ENCODE measurements at regions of chrX and their contacts with region 1.

Region 1: GRCh38 chrX:53089224-53089842 is 4.6 kb upstream of the KANTR start:
- DNase-seq: no peak
- ATAC-seq: no peak
- H3K4me3 ChIP-seq: peak overlapping the region in 1 of 2 donors; percentile 65
- H3K27ac ChIP-seq: peak overlapping the region in 1 of 2 donors; percentile 31
- H3K4me1 ChIP-seq: peaks cover 0 to 2% of the 10 kb centered on the region in 2 donors
- H3K27me3 ChIP-seq: no peaks in the 10 kb centered on the region

Region 2: DNA sequence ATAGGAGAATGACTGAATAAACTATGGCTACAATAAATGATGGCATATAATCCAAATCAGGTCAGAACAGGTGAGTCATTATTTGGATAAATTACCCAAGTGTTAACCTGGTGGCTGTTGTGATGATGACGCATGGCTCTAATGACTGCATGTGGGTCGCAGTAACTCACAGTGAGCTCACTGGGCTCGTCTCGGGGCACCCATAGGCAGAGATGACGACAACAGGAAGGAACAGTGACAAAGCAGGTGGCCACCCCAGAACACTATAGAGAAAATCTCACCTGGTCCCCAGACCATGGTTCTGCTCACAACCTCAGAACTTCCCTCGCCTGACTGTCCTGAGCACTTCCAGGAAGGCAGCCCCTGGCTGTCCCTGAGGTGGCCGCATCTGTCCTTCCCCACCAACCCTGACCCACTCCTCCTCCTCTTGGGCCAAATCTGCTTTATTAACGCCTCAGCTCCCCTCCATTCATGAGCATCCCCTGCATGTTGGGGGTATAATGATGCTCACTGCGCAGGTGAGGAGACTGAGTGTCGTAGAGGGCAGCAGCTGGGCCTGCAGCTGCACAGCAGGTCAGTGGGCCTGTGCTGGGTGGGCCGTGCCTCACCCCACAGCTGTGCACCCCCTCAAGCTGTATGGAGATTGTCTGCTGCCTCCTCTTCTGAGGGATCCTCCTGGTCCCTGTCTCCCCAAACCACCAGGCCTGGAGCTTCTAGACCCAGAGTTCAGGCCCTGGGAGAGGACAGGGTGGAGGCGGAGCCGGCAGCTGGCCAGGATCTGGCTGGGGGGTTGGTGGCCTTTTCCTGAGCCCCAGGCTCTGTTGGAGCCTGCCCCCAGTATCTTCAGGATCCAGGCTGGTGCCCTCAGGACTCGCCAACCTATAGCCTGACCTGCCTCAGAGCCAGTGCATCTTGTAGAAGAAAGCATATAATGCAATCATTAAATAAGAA is 100.1 kb before region 1 on chrX:
- intact Hi-C with region 1: no loop called
- DNase-seq: no peak
- ATAC-seq: peak; percentile 36
- H3K4me3 ChIP-seq: no peak overlapping the region
- H3K27ac ChIP-seq: no peak overlapping the region
- H3K4me1 ChIP-seq: no peaks in the 10 kb centered on the region
- H3K27me3 ChIP-seq: no peaks in the 10 kb centered on the region

Region 3: DNA sequence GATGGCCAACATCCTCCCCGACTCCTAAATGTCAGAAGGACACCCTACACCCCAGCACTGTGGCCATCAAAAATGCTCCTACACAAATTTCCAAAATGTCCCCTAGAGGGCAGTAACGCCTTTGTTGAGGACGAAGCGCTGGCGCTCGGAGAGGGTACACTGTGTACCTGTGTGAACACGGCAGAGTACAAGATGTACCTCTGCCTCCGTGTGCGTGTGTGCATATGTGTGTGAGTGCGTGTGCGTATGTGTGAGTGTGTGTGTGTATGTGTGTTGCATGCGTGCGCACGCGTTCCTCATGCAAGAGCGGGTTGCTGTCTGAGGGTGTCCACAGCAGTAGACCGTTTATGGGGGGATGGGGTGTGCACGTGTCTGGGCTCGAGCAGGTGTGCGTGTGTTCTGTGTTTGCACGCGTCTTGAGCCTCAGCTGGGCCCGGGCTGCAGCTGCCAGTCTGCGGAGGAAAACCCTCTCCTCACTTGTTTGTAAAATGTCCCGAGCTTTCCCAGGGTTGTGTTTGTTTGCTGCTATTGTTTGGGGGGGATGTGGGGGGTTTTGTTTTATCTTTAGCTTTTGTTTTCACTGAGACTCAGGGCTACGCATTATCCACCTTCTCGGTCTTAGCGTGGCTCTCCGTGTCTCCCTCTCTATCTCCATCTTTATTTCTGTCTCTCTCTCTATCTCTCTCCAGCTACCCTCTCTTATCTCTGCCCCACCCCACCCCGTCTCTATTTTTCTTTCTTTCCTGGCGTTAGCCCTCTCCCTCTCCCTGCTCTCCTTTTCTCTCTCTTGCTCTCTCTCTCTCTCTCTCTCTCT is 17.5 kb before region 1 on chrX:
- intact Hi-C with region 1: loop called in 1 of 2 experiments (anchors 1 kb)
- DNase-seq: peak in 1 of 2 donors; percentile 64
- ATAC-seq: peak; percentile 84
- H3K4me3 ChIP-seq: no peak overlapping the region
- H3K27ac ChIP-seq: peak overlapping the region in 1 of 2 donors; percentile 85
- H3K4me1 ChIP-seq: no peaks in the 10 kb centered on the region
- H3K27me3 ChIP-seq: no peaks in the 10 kb centered on the region

Region 4: GRCh38 chrX:53160297-53160984 is 71.1 kb after region 1 on chrX:
- intact Hi-C with region 1: no loop called
- DNase-seq: no peak
- ATAC-seq: no peak
- H3K4me3 ChIP-seq: no peak overlapping the region
- H3K27ac ChIP-seq: no peak overlapping the region
- H3K4me1 ChIP-seq: no peaks in the 10 kb centered on the region
- H3K27me3 ChIP-seq: no peaks in the 10 kb centered on the region

Measured in aorta (tissue), 5 donors.